Activated naive CD8-positive, alpha-beta T cell treated with anti-CD3 and anti-CD28 coated beads, Interleukin-2, amount 10 ng/mL, durations not matched to agents 7 days and 5 days (primary cell): ENCODE measurements at regions of chr11 and their contacts with region 1.

Region 1: GRCh38 chr11:65652511-65653231 is 10.0 kb downstream of the RELA start:
- DNase-seq: peak; percentile 99
- ATAC-seq: peak; percentile 88
- H3K4me3 Mint-ChIP-seq: peak overlapping the region; percentile 90
- H3K27ac Mint-ChIP-seq: peak overlapping the region; percentile 92
- H3K4me1 Mint-ChIP-seq: peaks cover 36% of the 10 kb centered on the region
- H3K27me3 Mint-ChIP-seq: no peaks in the 10 kb centered on the region

Region 2: GRCh38 chr11:65569973-65570918 is 82.4 kb before region 1 on chr11 and contains the start of gene ZNRD2:
- POLR2A ChIA-PET with region 1: no interaction called
- DNase-seq: peak; percentile 97
- ATAC-seq: peak; percentile 72
- H3K4me3 Mint-ChIP-seq: peak within 1 kb of the TSS; percentile 94
- H3K27ac Mint-ChIP-seq: peak within 1 kb of the TSS; percentile 98
- H3K4me1 Mint-ChIP-seq: peaks cover 58% of the 10 kb centered on the region
- H3K27me3 Mint-ChIP-seq: no peaks in the 10 kb centered on the region
- total RNA-seq, gene ZNRD2: 27.2 to 30.0 TPM

Region 3: GRCh38 chr11:65637794-65638317 is 14.8 kb before region 1 on chr11 and contains the start of gene SIPA1:
- POLR2A ChIA-PET with region 1: interaction called, 182 read pairs
- DNase-seq: peak; percentile 94
- ATAC-seq: peak; percentile 34
- H3K4me3 Mint-ChIP-seq: peak within 1 kb of the TSS; percentile 92
- H3K27ac Mint-ChIP-seq: peak within 1 kb of the TSS; percentile 93
- H3K4me1 Mint-ChIP-seq: peaks cover 37% of the 10 kb centered on the region
- H3K27me3 Mint-ChIP-seq: no peaks in the 10 kb centered on the region
- total RNA-seq, gene SIPA1: 245 to 266 TPM

Region 4: GRCh38 chr11:65700391-65700790 is 47.7 kb after region 1 on chr11:
- POLR2A ChIA-PET with region 1: no interaction called
- DNase-seq: no peak
- ATAC-seq: no peak
- H3K4me3 Mint-ChIP-seq: no peak overlapping the region
- H3K27ac Mint-ChIP-seq: no peak overlapping the region
- H3K4me1 Mint-ChIP-seq: no peaks in the 10 kb centered on the region
- H3K27me3 Mint-ChIP-seq: peaks cover 22% of the 10 kb centered on the region

Region 5: DNA sequence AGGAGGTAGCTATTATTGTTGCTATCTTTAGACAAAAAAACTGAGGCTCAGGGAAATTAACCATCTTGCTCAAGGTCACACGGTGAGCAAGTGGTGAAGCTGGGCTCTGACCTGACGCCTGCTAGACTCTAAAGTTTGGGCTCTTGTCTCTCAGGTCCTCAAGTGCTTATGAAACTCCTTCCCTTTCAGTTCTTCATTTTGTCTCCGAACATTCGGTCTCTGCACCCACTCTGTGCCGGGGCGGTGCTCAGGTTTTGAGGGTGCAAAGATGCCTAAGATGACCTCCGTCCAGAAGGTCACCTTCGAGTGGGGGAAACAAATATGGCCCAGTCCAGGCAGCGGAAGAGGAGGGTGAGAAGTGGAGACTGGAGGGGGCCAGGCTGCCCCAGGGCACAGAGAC is 150.2 kb after region 1 on chr11:
- POLR2A ChIA-PET with region 1: no interaction called
- DNase-seq: no peak
- ATAC-seq: no peak
- H3K4me3 Mint-ChIP-seq: no peak overlapping the region
- H3K27ac Mint-ChIP-seq: no peak overlapping the region
- H3K4me1 Mint-ChIP-seq: peaks cover 12% of the 10 kb centered on the region
- H3K27me3 Mint-ChIP-seq: peaks cover 42% of the 10 kb centered on the region